Uterus (tissue), 4 donors: ENCODE measurements at regions of chr1 and their contacts with region 1.

Region 1: DNA sequence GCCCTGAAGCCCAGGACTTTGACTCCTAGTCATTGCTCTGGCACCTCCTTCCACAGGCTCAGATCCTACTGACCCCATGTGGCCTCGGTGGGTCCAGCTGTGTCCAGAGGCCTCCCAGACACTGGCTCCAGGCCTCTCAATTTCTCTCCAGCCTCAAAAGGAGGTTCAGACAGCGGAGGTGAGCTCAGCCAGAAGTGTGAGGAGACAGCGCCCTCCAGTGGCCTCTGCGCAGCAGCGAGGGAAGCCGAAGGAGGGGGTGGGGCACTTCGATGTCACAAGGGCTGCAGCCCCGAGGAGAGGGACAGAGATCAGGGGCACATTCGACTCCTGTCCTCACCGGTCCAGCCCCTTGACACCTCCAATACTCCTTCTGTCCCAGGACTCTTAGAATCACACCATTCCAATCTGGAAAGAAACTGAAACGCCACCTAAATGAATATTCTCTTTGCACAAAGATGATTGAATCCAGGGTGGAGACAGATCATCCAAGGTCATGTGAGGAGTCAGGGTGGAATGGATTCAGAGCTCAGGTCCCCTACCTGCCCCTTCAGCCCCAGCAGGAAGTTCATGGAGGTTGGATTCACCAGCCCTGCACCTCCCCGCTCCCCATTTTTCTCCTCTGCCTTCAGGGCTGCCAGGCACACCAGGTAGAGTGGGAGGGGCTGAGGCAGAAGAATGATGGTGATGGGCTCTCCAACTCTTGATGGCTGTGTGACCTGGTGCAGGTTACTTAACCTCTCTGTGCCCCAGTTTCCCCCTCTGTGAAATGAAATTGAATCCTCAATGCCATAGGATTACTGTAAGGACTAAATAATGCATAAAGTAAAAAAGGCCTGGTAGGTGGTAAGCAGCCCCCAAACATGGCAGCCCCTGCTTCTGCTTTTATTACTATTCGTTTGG is 34.8 kb upstream of the ZBTB40 start:
- DNase-seq: peak; percentile 28 to 62
- H3K4me3 ChIP-seq: no peak overlapping the region
- H3K27ac ChIP-seq: no peak overlapping the region
- H3K4me1 ChIP-seq: peaks cover 0 to 6% of the 10 kb centered on the region in 2 donors
- H3K27me3 ChIP-seq: no peaks in the 10 kb centered on the region
- CTCF ChIP-seq: peak; percentile 30 to 87 (median 67)
- POLR2A ChIP-seq: no peak

Region 2: GRCh38 chr1:22641906-22642636 is 225.3 kb after region 1 on chr1:
- intact Hi-C with region 1: loop called (anchors 5 kb)
- DNase-seq: peak; percentile 73 to 84
- H3K4me3 ChIP-seq: no peak overlapping the region
- H3K27ac ChIP-seq: no peak overlapping the region
- H3K4me1 ChIP-seq: no peaks in the 10 kb centered on the region
- H3K27me3 ChIP-seq: no peaks in the 10 kb centered on the region
- CTCF ChIP-seq: peak; percentile 83 to 95 (median 88)
- POLR2A ChIP-seq: peak in 1 of 2 donors; percentile 20